Mammary epithelial cell (primary cell): ENCODE measurements at regions of chr9 and their contacts with region 1.

Region 1: DNA sequence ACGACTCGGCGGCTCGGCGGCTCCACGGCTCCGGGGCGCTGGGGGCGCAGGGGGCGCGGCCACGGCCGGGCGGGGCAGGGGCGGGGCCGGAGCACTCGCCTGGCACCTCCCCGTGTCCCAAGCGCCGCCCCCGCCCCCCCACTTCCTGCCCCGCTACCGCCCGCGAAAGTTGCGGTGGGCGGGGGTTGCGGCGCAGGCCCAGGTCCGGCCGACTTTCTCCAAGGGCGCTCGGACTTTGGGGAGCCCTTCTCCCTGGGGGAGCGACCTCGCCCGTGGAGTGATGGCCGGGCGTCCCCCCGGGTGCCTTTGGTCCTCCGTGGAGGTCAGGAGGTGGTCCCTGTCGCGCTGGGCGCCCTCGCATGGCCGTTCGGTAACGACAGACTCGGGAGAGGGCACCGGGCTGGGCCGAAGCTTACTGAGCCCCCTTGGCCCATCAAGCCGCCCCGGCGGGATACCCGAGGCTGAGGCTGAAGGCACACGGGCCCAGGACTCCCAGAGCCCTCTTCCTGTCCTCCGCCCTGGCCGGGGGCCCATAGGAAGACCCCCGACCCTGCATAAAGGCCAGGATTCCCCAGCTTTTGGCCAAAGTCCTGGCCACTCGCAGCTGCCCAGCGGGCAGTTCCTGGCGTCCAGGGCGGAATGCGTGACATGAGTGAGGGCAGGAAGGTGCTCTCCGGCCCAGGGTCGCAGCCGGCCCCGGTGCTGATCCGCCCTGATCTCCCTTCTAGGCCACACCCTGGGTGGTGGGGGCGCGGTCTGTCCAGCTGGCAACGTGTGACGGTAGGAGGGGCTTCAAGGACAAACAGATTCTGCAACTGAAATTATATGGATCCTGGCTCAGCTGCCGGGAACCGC is 883 bp upstream of the VAV2 start:
- DNase-seq: peak; percentile 89
- H3K4me3 ChIP-seq: peak overlapping the region; percentile 64 to 92 (median 91)
- H3K27ac ChIP-seq: peak overlapping the region; percentile 63
- H3K4me1 ChIP-seq: peaks cover 33% of the 10 kb centered on the region
- H3K27me3 ChIP-seq: no peaks in the 10 kb centered on the region
- CTCF ChIP-seq: peak; percentile 19 to 56

Region 2: GRCh38 chr9:133782157-133783130 is 210.6 kb before region 1 on chr9:
- CTCF ChIA-PET with region 1: interaction called, 6 read pairs
- dilution Hi-C with region 1: no loop called
- in situ Hi-C with region 1: loop called in 1 of 2 experiments (anchors 5 kb)
- intact Hi-C with region 1: loop called (anchors 1 kb)
- DNase-seq: peak; percentile 22
- H3K4me3 ChIP-seq: no peak overlapping the region
- H3K27ac ChIP-seq: no peak overlapping the region
- H3K4me1 ChIP-seq: no peaks in the 10 kb centered on the region
- H3K27me3 ChIP-seq: no peaks in the 10 kb centered on the region
- CTCF ChIP-seq: peak; percentile 80 to 83

Region 3: GRCh38 chr9:133792721-133793470 is 200.1 kb before region 1 on chr9:
- CTCF ChIA-PET with region 1: no interaction called
- dilution Hi-C with region 1: loop called (anchors 5 kb)
- in situ Hi-C with region 1: loop called (anchors 5 kb)
- intact Hi-C with region 1: loop called (anchors 1 kb)
- DNase-seq: peak; percentile 58
- H3K4me3 ChIP-seq: no peak overlapping the region
- H3K27ac ChIP-seq: no peak overlapping the region
- H3K4me1 ChIP-seq: peaks cover 9% of the 10 kb centered on the region
- H3K27me3 ChIP-seq: no peaks in the 10 kb centered on the region
- CTCF ChIP-seq: peak; percentile 77 to 90

Region 4: GRCh38 chr9:133813749-133814585 is 179.0 kb before region 1 on chr9:
- CTCF ChIA-PET with region 1: no interaction called
- dilution Hi-C with region 1: no loop called
- in situ Hi-C with region 1: no loop called
- intact Hi-C with region 1: no loop called
- DNase-seq: no peak
- H3K4me3 ChIP-seq: no peak overlapping the region
- H3K27ac ChIP-seq: no peak overlapping the region
- H3K4me1 ChIP-seq: no peaks in the 10 kb centered on the region
- H3K27me3 ChIP-seq: no peaks in the 10 kb centered on the region
- CTCF ChIP-seq: no peak

Region 5: DNA sequence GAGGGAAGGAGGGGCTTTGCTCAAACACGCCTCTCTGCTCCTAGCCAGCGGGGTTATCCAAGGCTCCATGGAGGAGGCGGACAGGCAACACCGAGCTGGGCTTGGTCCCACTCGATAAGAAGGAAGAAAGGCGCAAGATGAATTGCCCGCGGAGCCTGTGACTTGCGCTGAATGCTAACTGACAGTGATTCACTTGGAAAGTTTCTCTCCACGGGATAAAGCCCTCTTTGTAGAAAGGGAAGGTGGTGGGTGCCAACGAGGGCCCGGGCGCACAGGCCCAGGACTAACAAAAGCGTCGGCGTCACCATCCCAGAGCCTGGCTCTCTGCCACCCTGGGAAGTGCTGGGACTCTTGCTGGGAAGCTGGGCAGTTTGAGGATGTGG is 76.9 kb before region 1 on chr9:
- CTCF ChIA-PET with region 1: no interaction called
- dilution Hi-C with region 1: no loop called
- in situ Hi-C with region 1: no loop called
- intact Hi-C with region 1: loop called (anchors 2 kb)
- DNase-seq: peak; percentile 66
- H3K4me3 ChIP-seq: no peak overlapping the region
- H3K27ac ChIP-seq: peak overlapping the region; percentile 26
- H3K4me1 ChIP-seq: peaks cover 16% of the 10 kb centered on the region
- H3K27me3 ChIP-seq: no peaks in the 10 kb centered on the region
- CTCF ChIP-seq: no peak

Region 6: GRCh38 chr9:134099123-134099787 is 106.2 kb after region 1 on chr9:
- CTCF ChIA-PET with region 1: no interaction called
- dilution Hi-C with region 1: no loop called
- in situ Hi-C with region 1: loop called in 1 of 2 experiments (anchors 10 kb)
- intact Hi-C with region 1: loop called (anchors 1 kb)
- DNase-seq: peak; percentile 45
- H3K4me3 ChIP-seq: no peak overlapping the region
- H3K27ac ChIP-seq: no peak overlapping the region
- H3K4me1 ChIP-seq: no peaks in the 10 kb centered on the region
- H3K27me3 ChIP-seq: no peaks in the 10 kb centered on the region
- CTCF ChIP-seq: peak; percentile 80 to 95